GM12878 (cell line): ENCODE measurements at regions of chr22 and their contacts with region 1.

Region 1: GRCh38 chr22:41800348-41801146 is at the start of gene CCDC134:
- DNase-seq: peak; percentile 70
- ATAC-seq: peak; percentile 98
- H3K4me3 ChIP-seq: peak within 1 kb of the TSS; percentile 89
- H3K27ac ChIP-seq: peak within 1 kb of the TSS; percentile 82
- H3K4me1 ChIP-seq: peaks cover 19% of the 10 kb centered on the region
- H3K27me3 ChIP-seq: no peaks in the 10 kb centered on the region
- CTCF ChIP-seq: no peak
- EP300 ChIP-seq: no peak
- POLR2A ChIP-seq: peak; percentile 95
- RAD21 ChIP-seq: no peak
- polyA plus RNA-seq, gene CCDC134: 0.35 to 1.2 TPM

Region 2: DNA sequence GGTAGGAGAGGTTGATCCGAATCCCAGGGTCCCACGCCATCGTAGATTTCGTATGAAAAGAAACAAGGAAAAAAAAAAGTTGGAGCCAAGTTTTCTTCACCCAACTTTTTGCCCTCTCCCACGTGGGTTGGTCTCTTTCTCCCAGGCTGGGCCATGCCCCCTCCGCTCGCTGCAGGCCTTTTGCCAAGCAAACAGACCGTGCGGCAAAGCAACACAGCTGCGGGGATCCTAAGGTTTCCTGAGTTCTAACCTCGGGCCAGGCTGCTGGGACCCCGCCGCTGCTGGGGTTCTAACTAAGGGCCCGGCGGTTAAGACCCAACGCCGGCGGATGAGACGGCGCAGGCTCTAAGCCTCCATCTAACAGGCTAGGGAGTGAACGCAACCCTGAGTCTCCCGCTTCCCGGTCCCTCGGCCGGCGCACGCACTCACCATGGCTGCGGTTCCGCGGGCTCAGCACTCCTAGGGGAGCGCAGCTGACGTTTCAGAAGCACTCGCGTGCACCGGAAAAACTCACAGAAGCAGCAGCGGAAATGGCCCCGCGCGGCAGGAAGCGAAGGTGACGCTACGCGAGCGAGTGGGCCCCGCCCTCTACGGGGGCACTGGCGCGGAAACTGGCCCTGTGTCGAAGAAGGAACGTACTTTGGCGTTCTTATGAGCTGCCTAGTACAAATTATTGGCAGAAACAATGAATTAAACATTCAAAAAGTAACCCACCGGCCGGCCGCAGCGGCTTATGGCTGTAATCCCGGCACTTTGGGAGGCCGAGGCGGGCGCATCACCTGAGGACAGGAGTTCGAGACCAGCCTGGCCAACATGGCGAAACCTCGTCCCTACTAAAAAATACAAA is 112.0 kb before region 1 on chr22 and contains the start of gene SNU13:
- CTCF ChIA-PET with region 1: interaction called, 3 read pairs
- POLR2A ChIA-PET with region 1: interaction called, 15 read pairs
- RAD21 ChIA-PET with region 1: interaction called, 4 read pairs
- SMC1A ChIA-PET with region 1: no interaction called
- in situ Hi-C with region 1: no loop called
- intact Hi-C with region 1: no loop called
- DNase-seq: peak; percentile 73
- ATAC-seq: peak; percentile 93
- H3K4me3 ChIP-seq: peak within 1 kb of the TSS; percentile 87
- H3K27ac ChIP-seq: peak within 1 kb of the TSS; percentile 98
- H3K4me1 ChIP-seq: peaks cover 3% of the 10 kb centered on the region; the same call in 1 of the 2 replicates
- H3K27me3 ChIP-seq: no peaks in the 10 kb centered on the region
- CTCF ChIP-seq: no peak
- EP300 ChIP-seq: peak in 1 of 2 experiments; percentile 36; a peak in 1 of 4 replicates
- POLR2A ChIP-seq: peak; percentile 90
- RAD21 ChIP-seq: no peak
- polyA plus RNA-seq, gene SNU13: 611 to 870 TPM

Region 3: GRCh38 chr22:41752011-41752970 is 48.3 kb before region 1 on chr22:
- CTCF ChIA-PET with region 1: interaction called, 27 read pairs
- POLR2A ChIA-PET with region 1: interaction called, 28 read pairs
- RAD21 ChIA-PET with region 1: interaction called, 30 read pairs
- SMC1A ChIA-PET with region 1: interaction called, 32 read pairs
- in situ Hi-C with region 1: no loop called
- intact Hi-C with region 1: no loop called
- DNase-seq: peak; percentile 66
- ATAC-seq: peak; percentile 88
- H3K4me3 ChIP-seq: peak overlapping the region; percentile 32; the same call in 1 of the 2 replicates
- H3K27ac ChIP-seq: peak overlapping the region; percentile 66
- H3K4me1 ChIP-seq: peaks cover 39% of the 10 kb centered on the region
- H3K27me3 ChIP-seq: no peaks in the 10 kb centered on the region
- CTCF ChIP-seq: no peak
- EP300 ChIP-seq: 0 out of 4 replicates have a peak, but pooled peaks of 1 of the 2 experiments have one; percentile 17
- POLR2A ChIP-seq: no peak
- RAD21 ChIP-seq: no peak

Region 4: GRCh38 chr22:41780746-41781505 is 19.6 kb before region 1 on chr22:
- CTCF ChIA-PET with region 1: interaction called, 18 read pairs
- POLR2A ChIA-PET with region 1: interaction called, 172 read pairs
- RAD21 ChIA-PET with region 1: interaction called, 56 read pairs
- SMC1A ChIA-PET with region 1: interaction called, 57 read pairs
- in situ Hi-C with region 1: no loop called
- intact Hi-C with region 1: no loop called
- DNase-seq: peak; percentile 90
- ATAC-seq: peak; percentile 97
- H3K4me3 ChIP-seq: peak overlapping the region; percentile 76
- H3K27ac ChIP-seq: peak overlapping the region; percentile 54
- H3K4me1 ChIP-seq: peaks cover 11% of the 10 kb centered on the region
- H3K27me3 ChIP-seq: no peaks in the 10 kb centered on the region
- CTCF ChIP-seq: no peak
- EP300 ChIP-seq: peak in 1 of 2 experiments; percentile 34; a peak in 1 of 4 replicates
- POLR2A ChIP-seq: peak; percentile 81
- RAD21 ChIP-seq: no peak

Region 5: GRCh38 chr22:41925655-41926460 is 125.3 kb after region 1 on chr22:
- CTCF ChIA-PET with region 1: interaction called, 3 read pairs
- POLR2A ChIA-PET with region 1: interaction called, 13 read pairs
- RAD21 ChIA-PET with region 1: interaction called, 6 read pairs
- SMC1A ChIA-PET with region 1: no interaction called
- in situ Hi-C with region 1: no loop called
- intact Hi-C with region 1: no loop called
- DNase-seq: no peak
- ATAC-seq: peak; percentile 59
- H3K4me3 ChIP-seq: peak overlapping the region; percentile 97
- H3K27ac ChIP-seq: peak overlapping the region; percentile 93
- H3K4me1 ChIP-seq: peaks cover 53% of the 10 kb centered on the region
- H3K27me3 ChIP-seq: no peaks in the 10 kb centered on the region
- CTCF ChIP-seq: peak; percentile 78 to 87 (median 79)
- EP300 ChIP-seq: no peak
- POLR2A ChIP-seq: peak; percentile 54; the same call in 1 of the 2 replicates
- RAD21 ChIP-seq: peak; percentile 50

Region 6: GRCh38 chr22:41946629-41947423 is 146.3 kb after region 1 on chr22 and contains the start of gene CENPM:
- CTCF ChIA-PET with region 1: interaction called, 4 read pairs
- POLR2A ChIA-PET with region 1: interaction called, 12 read pairs
- RAD21 ChIA-PET with region 1: interaction called, 5 read pairs
- SMC1A ChIA-PET with region 1: interaction called, 3 read pairs
- in situ Hi-C with region 1: no loop called
- intact Hi-C with region 1: no loop called
- DNase-seq: peak; percentile 80
- ATAC-seq: peak; percentile 88
- H3K4me3 ChIP-seq: peak within 1 kb of the TSS; percentile 78
- H3K27ac ChIP-seq: peak within 1 kb of the TSS; percentile 94
- H3K4me1 ChIP-seq: peaks cover 59% of the 10 kb centered on the region
- H3K27me3 ChIP-seq: no peaks in the 10 kb centered on the region
- CTCF ChIP-seq: no peak
- EP300 ChIP-seq: no peak
- POLR2A ChIP-seq: peak; percentile 83
- RAD21 ChIP-seq: no peak
- polyA plus RNA-seq, gene CENPM: 36.7 to 62.3 TPM

Region 7: DNA sequence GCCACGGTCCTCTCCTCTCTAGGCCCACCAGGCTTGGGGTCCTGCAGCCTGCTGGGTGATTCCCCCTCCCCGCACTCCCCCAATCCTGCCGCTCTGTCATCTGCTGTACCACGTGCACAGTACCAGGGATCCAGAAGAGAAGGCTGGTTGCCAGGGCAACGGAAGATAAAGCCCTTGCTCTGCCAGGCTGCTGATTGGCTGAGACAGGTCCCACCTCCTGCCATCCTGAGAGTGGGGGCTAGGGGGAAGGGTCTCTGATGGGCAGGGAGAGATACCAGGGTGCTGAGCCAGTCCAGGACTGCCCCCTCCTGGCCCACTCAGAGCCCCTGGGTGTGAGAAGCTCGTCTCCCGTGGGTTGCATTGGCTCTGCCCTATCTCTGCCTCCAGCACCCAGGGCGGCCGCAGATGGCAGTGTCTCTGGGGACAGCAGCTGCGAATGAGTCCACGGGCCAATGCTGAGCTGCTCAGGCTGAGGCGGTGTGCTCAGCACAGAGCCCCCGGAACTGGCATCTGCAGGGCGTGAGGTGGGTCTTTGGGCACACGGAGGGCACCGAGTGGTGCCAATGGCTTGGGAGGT is 151.4 kb after region 1 on chr22 and contains the start of gene SMIM45:
- CTCF ChIA-PET with region 1: interaction called, 4 read pairs
- POLR2A ChIA-PET with region 1: interaction called, 12 read pairs
- RAD21 ChIA-PET with region 1: no interaction called
- SMC1A ChIA-PET with region 1: no interaction called
- in situ Hi-C with region 1: no loop called
- intact Hi-C with region 1: no loop called
- DNase-seq: no peak
- ATAC-seq: peak; percentile 35
- H3K4me3 ChIP-seq: no peak within 1 kb of the TSS
- H3K27ac ChIP-seq: no peak within 1 kb of the TSS
- H3K4me1 ChIP-seq: peaks cover 41% of the 10 kb centered on the region
- H3K27me3 ChIP-seq: no peaks in the 10 kb centered on the region
- CTCF ChIP-seq: peak in 1 of 3 experiments; percentile 19; a peak in 2 of 6 replicates
- EP300 ChIP-seq: no peak
- POLR2A ChIP-seq: no peak
- RAD21 ChIP-seq: no peak